ENCODE measurements at regions of chr6 and their contacts with region 1.

Region 1: GRCh38 chr6:44002593-44003344 is 124.5 kb downstream of the MRPL14 start:
- H3K4me3 Mint-ChIP-seq: peak overlapping the region; percentile 60
- H3K27ac Mint-ChIP-seq: peak overlapping the region; percentile 32
- H3K4me1 Mint-ChIP-seq: peaks cover 55% of the 10 kb centered on the region
- H3K27me3 Mint-ChIP-seq: peaks cover 85% of the 10 kb centered on the region

Region 2: DNA sequence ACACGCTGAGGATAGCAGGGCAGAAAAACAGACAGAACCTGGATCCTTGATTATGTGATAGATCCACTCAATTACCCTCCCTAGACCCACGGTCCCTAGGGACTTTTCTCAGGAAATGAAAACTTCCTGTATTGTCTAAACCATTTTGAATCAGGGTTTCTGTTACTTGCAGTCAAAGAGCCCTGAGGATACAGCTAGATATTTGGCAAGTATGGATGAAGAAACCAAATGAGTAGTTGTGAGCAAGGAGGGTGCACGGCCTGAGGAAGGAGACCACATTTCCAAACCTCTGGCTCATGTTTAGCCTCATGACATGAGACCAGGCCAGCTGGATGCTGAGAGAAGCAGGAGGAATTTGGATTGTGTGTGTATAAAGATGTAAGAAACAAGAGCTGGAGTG is 32.9 kb after region 1 on chr6:
- intact Hi-C with region 1: loop called (anchors 5 kb)
- H3K4me3 Mint-ChIP-seq: no peak overlapping the region
- H3K27ac Mint-ChIP-seq: peak overlapping the region; percentile 25
- H3K4me1 Mint-ChIP-seq: peaks cover 58% of the 10 kb centered on the region
- H3K27me3 Mint-ChIP-seq: peaks cover 9% of the 10 kb centered on the region

Measured in dendritic cell treated with granulocyte-macrophage colony-stimulating factor and Interleukin-4, amounts not matched to agents 40 ng/mL and 50 ng/mL, for 4 days (primary cell).